PC-3 (cell line): ENCODE measurements at regions of chr3 and their contacts with region 1.

Region 1: GRCh38 chr3:15268033-15268631 is 62.1 kb downstream of the CAPN7 start:
- DNase-seq: peak; percentile 91
- ATAC-seq: peak; percentile 58
- H3K4me3 ChIP-seq: no peak overlapping the region
- H3K27ac ChIP-seq: no peak overlapping the region
- H3K4me1 ChIP-seq: peaks cover 22% of the 10 kb centered on the region
- H3K27me3 ChIP-seq: no peaks in the 10 kb centered on the region
- CTCF ChIP-seq: peak; percentile 98

Region 2: GRCh38 chr3:14508961-14509795 is 759.0 kb before region 1 on chr3:
- CTCF ChIA-PET with region 1: no interaction called
- POLR2A ChIA-PET with region 1: no interaction called
- intact Hi-C with region 1: no loop called
- DNase-seq: peak; percentile 80
- ATAC-seq: peak; percentile 89
- H3K4me3 ChIP-seq: peak overlapping the region; percentile 51; the same call in 1 of the 2 replicates
- H3K27ac ChIP-seq: no peak overlapping the region
- H3K4me1 ChIP-seq: no peaks in the 10 kb centered on the region
- H3K27me3 ChIP-seq: no peaks in the 10 kb centered on the region; the same call in 1 of the 2 replicates
- CTCF ChIP-seq: peak; percentile 80

Region 3: GRCh38 chr3:15098503-15099363 is 169.4 kb before region 1 on chr3 and contains the start of gene RBSN:
- CTCF ChIA-PET with region 1: no interaction called
- POLR2A ChIA-PET with region 1: no interaction called
- intact Hi-C with region 1: no loop called
- DNase-seq: peak; percentile 96
- ATAC-seq: peak; percentile 77
- H3K4me3 ChIP-seq: peak within 1 kb of the TSS; percentile 100
- H3K27ac ChIP-seq: peak within 1 kb of the TSS; percentile 47
- H3K4me1 ChIP-seq: peaks cover 26% of the 10 kb centered on the region
- H3K27me3 ChIP-seq: no peaks in the 10 kb centered on the region
- CTCF ChIP-seq: no peak
- total RNA-seq, gene RBSN: 18.7 and 26.8 TPM in 2 replicates

Region 4: DNA sequence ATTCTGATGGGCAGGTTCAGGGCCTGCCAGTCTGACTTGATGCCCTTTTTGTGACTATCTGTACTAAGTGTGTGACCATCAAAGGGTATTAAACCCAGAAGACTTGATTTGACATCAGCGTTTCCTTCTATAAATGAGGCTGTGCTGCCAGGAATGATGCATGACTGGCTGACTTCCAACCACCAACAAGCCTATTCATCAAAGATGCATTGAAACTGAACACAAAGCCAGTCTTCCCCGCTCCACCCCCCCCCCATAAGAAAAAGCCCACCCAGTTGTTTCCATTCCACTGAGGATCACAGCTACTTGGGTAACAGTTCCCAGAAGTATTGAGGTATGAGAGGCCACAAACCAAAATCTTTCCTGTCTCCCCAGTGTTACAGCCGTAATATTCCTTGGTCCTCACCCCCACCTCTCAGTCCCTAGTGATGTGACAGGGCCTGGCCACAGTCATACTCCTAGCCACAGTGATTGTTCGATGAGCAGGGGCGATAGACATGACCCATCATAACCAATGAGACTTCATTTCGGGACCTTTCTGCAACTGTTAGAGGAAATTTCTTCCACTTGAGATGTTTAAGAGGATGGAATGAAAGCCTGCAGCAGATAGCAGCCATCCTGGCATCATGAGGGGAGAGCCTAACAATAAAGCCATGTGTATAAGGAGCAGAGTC is 41.7 kb after region 1 on chr3:
- CTCF ChIA-PET with region 1: interaction called, 7 read pairs
- POLR2A ChIA-PET with region 1: no interaction called
- intact Hi-C with region 1: loop called (anchors 1 kb)
- DNase-seq: peak; percentile 61
- ATAC-seq: 0 out of 2 replicates have a peak, but pooled peaks have one; percentile 7
- H3K4me3 ChIP-seq: no peak overlapping the region
- H3K27ac ChIP-seq: peak overlapping the region; percentile 74
- H3K4me1 ChIP-seq: peaks cover 35% of the 10 kb centered on the region
- H3K27me3 ChIP-seq: no peaks in the 10 kb centered on the region
- CTCF ChIP-seq: no peak

Region 5: GRCh38 chr3:15332405-15333098 is 64.4 kb after region 1 on chr3 and contains the start of gene SH3BP5:
- CTCF ChIA-PET with region 1: interaction called, 20 read pairs
- POLR2A ChIA-PET with region 1: no interaction called
- intact Hi-C with region 1: loop called (anchors 1 kb)
- DNase-seq: peak; percentile 81
- ATAC-seq: peak; percentile 76
- H3K4me3 ChIP-seq: peak within 1 kb of the TSS; percentile 99
- H3K27ac ChIP-seq: no peak within 1 kb of the TSS
- H3K4me1 ChIP-seq: peaks cover 29% of the 10 kb centered on the region
- H3K27me3 ChIP-seq: no peaks in the 10 kb centered on the region
- CTCF ChIP-seq: peak; percentile 51; the same call in 1 of the 2 replicates
- total RNA-seq, gene SH3BP5: 21.2 and 23.0 TPM in 2 replicates

Region 6: DNA sequence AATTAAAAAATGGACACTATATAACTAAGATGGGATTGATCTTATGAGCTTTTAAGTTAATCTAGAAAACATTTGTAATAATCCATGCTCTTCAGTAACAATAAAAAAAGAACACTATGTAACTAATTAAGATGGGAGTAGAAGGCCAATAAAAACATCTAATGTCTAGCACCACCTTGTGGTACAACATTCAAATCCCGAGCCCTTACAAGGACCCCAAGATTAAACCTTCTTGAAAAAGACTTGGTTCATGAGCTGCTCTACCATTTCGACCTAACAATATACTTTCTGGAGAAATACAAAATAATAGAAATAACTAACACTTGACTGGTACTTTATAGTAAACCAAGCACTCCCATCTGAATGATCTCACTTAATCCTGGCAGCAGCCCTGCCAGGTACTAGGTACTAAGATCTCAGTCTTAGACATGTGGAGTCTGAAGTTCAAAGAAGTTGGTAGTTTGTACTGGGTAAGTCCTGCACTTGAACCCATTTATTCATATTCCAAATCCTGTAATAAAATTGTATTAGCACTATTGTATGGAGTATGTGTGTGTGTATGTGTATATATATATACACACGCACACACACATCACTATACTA is 137.4 kb after region 1 on chr3:
- CTCF ChIA-PET with region 1: interaction called, 46 read pairs
- POLR2A ChIA-PET with region 1: interaction called, 3 read pairs
- intact Hi-C with region 1: loop called (anchors 1 kb)
- DNase-seq: peak; percentile 72
- ATAC-seq: peak; percentile 77
- H3K4me3 ChIP-seq: no peak overlapping the region
- H3K27ac ChIP-seq: no peak overlapping the region
- H3K4me1 ChIP-seq: peaks cover 8% of the 10 kb centered on the region
- H3K27me3 ChIP-seq: no peaks in the 10 kb centered on the region
- CTCF ChIP-seq: peak; percentile 93

Region 7: DNA sequence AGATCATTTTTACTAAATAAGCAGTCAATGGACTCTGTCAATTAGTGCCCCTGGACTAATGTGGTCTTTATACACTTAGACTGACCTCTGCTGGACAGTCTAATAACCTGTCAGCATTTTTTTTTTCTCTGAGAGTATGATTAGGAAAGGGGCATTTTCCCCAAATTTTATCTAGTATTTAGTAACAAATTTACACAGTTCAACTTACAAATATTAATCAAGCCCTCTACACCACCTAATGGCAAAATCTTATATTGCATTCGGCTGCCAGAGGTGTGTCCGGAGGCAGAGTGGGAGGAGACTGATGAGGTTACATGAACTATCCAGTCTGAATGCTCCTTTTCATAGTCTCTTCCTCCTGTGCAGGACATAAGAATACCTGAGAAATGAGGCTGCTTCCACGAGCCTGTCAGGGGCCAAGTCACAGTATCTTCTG is 289.4 kb after region 1 on chr3:
- CTCF ChIA-PET with region 1: interaction called, 5 read pairs
- POLR2A ChIA-PET with region 1: no interaction called
- intact Hi-C with region 1: loop called (anchors 5 kb)
- DNase-seq: peak; percentile 94
- ATAC-seq: peak; percentile 100
- H3K4me3 ChIP-seq: no peak overlapping the region
- H3K27ac ChIP-seq: no peak overlapping the region
- H3K4me1 ChIP-seq: 0 out of 2 replicates have a peak, but pooled peaks cover 3% of the 10 kb centered on the region
- H3K27me3 ChIP-seq: no peaks in the 10 kb centered on the region
- CTCF ChIP-seq: peak; percentile 80